Sciatic nerve (tissue), 2 donors: ENCODE measurements at regions of chr2 and their contacts with region 1.

Region 1: DNA sequence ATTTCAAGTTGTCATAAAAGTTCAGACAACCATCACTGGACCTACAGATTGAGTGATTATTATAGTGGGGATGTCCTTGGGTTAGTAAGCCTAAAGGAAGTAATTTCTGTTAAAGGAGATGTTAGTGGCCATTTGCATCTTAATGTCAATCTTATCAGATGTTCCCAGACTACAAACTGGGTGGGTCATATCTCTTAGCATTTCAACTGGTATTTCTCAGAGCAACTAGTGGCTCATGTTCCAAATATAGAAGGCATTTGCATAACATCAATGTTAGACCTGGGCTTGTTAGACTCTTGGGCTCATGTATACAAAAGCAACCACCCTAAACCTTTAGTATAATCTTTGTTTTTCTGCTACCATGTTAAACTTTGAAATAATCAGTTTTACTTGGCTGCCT is 17.9 kb downstream of the PLEKHA3 start:
- DNase-seq: no peak
- ATAC-seq: no peak

Region 2: DNA sequence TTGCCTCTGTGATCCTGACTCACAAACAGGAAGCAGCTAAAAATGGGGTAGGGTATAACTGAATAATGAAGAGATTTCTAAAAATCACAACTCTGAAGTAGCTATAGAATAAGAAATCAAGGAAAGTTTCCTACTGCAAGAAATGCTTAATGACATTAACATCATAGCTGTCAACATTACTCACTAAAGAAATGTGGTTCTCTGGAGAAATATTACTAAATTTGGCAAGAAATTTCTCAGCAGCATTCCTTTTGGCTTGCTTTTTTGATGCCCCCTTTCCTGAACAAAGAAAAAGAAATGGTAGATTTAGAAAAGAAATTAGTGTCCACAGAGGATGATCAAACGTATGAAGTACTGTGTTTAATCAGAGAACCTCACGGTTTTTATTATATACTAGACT is 56.7 kb before region 1 on chr2:
- intact Hi-C with region 1: loop called (anchors 2 kb)
- DNase-seq: no peak
- ATAC-seq: no peak

Region 3: GRCh38 chr2:178553047-178553446 is 54.9 kb after region 1 on chr2:
- intact Hi-C with region 1: no loop called
- DNase-seq: no peak
- ATAC-seq: no peak